A549 (cell line): ENCODE measurements at regions of chr15 and their contacts with region 1.

Region 1: GRCh38 chr15:84600851-84601838 is at the start of gene ZSCAN2:
- DNase-seq: peak; percentile 95 to 99
- ATAC-seq: peak; percentile 97 to 98
- H3K4me3 ChIP-seq: peak within 1 kb of the TSS; percentile 72
- H3K27ac ChIP-seq: peak within 1 kb of the TSS; percentile 78 to 88
- H3K4me1 ChIP-seq: peaks cover 27% of the 10 kb centered on the region
- CTCF ChIP-seq: no peak
- EP300 ChIP-seq: no peak
- POLR2A ChIP-seq: peak; percentile 36
- RAD21 ChIP-seq: no peak
- polyA plus RNA-seq, gene ZSCAN2: 16.2 and 16.5 TPM in 2 replicates

Region 2: DNA sequence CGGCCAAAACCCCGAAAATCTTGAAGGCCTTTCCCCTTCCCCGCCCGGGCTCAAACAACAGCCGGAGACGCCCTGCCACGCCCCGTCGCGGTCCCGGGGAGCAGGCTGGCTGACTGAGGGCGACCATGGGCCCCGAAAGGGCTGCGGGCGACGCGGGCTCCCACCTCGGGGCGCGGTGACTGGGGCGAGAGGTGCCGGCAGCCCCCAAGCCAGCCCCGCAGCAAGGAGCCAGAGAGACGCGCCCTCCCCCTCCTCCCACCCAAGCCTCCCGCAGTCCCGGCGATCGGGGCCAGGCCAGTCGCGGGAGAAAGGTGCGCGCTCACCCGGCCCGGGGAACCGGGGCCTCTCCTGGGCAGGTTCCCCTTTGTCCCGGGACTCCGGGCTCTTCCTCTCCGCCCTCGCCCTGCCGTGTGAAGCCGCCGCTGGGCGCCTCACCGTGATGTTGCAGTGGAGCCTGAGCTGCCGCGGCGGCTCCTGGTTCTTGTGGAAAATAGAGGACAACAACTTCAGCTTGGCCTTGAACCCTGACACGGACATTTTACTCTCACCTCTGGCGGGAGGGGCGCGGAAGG is 30.9 kb before region 1 on chr15:
- CTCF ChIA-PET with region 1: interaction called, 21 read pairs
- POLR2A ChIA-PET with region 1: no interaction called
- DNase-seq: peak; percentile 44 to 48
- ATAC-seq: peak; percentile 78 to 79
- H3K4me3 ChIP-seq: peak overlapping the region; percentile 93
- H3K27ac ChIP-seq: peak overlapping the region; percentile 91 to 96
- H3K4me1 ChIP-seq: peaks cover 5% of the 10 kb centered on the region
- CTCF ChIP-seq: no peak
- EP300 ChIP-seq: no peak
- POLR2A ChIP-seq: peak; percentile 35; the same call in 1 of the 2 replicates
- RAD21 ChIP-seq: no peak

Region 3: GRCh38 chr15:84621358-84621979 is 20.3 kb after region 1 on chr15:
- CTCF ChIA-PET with region 1: interaction called, 24 read pairs
- POLR2A ChIA-PET with region 1: no interaction called
- DNase-seq: no peak
- ATAC-seq: no peak
- H3K4me3 ChIP-seq: no peak overlapping the region
- H3K27ac ChIP-seq: no peak overlapping the region
- H3K4me1 ChIP-seq: no peaks in the 10 kb centered on the region
- CTCF ChIP-seq: no peak
- EP300 ChIP-seq: no peak
- POLR2A ChIP-seq: no peak
- RAD21 ChIP-seq: no peak

Region 4: DNA sequence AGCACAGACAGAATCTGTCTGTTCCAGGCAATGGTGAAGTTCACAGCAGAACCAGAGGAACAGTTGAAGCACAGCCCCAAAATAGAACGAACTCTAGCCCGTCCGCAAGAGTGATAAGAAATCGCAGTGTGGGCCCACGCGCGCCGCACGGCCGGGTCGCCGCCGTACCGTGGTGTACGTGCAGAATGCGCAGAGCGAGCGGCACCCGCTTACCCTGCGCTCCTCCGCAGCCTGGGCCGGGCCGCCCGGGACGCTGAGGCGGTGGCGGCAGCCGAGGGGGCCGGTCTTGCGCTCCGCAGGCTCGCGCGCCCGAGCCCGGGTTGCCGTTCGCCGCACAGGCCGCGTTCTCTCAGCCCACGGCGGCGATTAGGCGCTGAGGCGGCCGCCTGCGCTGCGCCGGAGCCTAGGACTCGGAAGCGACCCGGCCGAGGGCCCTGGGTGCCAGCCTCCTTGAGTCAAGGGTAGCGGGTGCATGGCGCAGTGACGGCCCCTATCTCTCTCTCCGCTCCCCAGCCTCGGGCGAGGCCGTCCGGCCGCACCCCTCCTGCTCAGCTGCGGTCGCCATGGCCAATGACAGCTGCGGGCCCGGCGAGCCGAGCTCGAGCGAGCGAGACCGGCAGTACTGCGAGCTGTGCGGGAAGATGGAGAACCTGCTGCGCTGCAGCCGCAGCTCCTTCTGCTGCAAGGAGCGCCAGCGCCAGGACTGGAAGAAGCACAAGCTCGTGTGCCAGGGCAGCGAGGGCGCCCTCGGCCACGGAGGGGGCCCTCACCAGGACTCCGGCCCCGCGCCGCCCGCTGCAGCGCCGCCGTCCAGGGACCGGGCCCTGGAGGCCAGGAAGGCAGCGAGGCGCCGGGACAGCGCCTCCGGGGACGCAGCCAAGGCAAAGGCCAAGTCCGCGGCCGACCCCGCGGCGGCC is 32.4 kb after region 1 on chr15:
- CTCF ChIA-PET with region 1: interaction called, 21 read pairs
- POLR2A ChIA-PET with region 1: interaction called, 16 read pairs
- DNase-seq: peak in 1 of 2 experiments; percentile 78
- ATAC-seq: peak; percentile 72 to 77
- H3K4me3 ChIP-seq: peak overlapping the region; percentile 51
- H3K27ac ChIP-seq: peak overlapping the region; percentile 63 to 87
- H3K4me1 ChIP-seq: peaks cover 24% of the 10 kb centered on the region; the same call in 2 of the 3 replicates
- CTCF ChIP-seq: peak; percentile 31; the same call in 2 of the 3 replicates
- EP300 ChIP-seq: no peak
- POLR2A ChIP-seq: peak; percentile 35
- RAD21 ChIP-seq: no peak; a peak in 2 of 5 replicates

Region 5: DNA sequence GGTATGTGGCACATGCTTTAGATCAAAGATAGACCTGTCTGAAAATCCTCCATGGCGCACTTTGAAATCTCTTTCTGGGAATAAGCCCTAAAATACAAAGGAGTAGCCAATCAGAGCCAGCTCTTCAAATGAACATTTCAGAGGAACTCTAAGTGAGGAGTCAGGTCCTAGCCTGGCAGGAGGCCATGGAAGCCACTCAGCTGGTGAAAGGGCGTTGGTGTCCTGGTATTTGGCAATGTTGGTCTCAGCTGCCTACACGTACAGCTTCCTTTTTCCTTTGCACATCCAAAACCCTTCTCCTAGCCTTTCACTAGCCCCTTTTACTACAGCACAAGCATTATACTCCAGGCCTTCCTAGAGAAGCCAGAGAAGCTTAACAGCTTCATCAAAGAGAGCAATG is 47.4 kb after region 1 on chr15:
- CTCF ChIA-PET with region 1: interaction called, 31 read pairs
- POLR2A ChIA-PET with region 1: interaction called, 8 read pairs
- DNase-seq: no peak
- ATAC-seq: no peak
- H3K4me3 ChIP-seq: no peak overlapping the region
- H3K27ac ChIP-seq: no peak overlapping the region
- H3K4me1 ChIP-seq: peaks cover 25% of the 10 kb centered on the region
- CTCF ChIP-seq: no peak
- EP300 ChIP-seq: no peak
- POLR2A ChIP-seq: no peak
- RAD21 ChIP-seq: no peak

Region 6: GRCh38 chr15:84725001-84725491 is 123.9 kb after region 1 on chr15:
- CTCF ChIA-PET with region 1: no interaction called
- POLR2A ChIA-PET with region 1: no interaction called
- DNase-seq: no peak
- ATAC-seq: 0 out of 6 replicates have a peak, but pooled peaks of 1 of the 2 experiments have one; percentile 30
- H3K4me3 ChIP-seq: no peak overlapping the region
- H3K27ac ChIP-seq: peak overlapping the region in 1 of 2 experiments; percentile 20; a peak in 2 of 6 replicates
- H3K4me1 ChIP-seq: no peaks in the 10 kb centered on the region
- CTCF ChIP-seq: no peak
- EP300 ChIP-seq: no peak
- POLR2A ChIP-seq: no peak
- RAD21 ChIP-seq: no peak

Region 7: GRCh38 chr15:85154061-85154460 is 552.9 kb after region 1 on chr15:
- CTCF ChIA-PET with region 1: no interaction called
- POLR2A ChIA-PET with region 1: no interaction called
- DNase-seq: no peak
- ATAC-seq: no peak
- H3K4me3 ChIP-seq: no peak overlapping the region
- H3K27ac ChIP-seq: no peak overlapping the region
- H3K4me1 ChIP-seq: no peaks in the 10 kb centered on the region
- CTCF ChIP-seq: no peak
- EP300 ChIP-seq: no peak
- POLR2A ChIP-seq: no peak
- RAD21 ChIP-seq: no peak

Region 8: DNA sequence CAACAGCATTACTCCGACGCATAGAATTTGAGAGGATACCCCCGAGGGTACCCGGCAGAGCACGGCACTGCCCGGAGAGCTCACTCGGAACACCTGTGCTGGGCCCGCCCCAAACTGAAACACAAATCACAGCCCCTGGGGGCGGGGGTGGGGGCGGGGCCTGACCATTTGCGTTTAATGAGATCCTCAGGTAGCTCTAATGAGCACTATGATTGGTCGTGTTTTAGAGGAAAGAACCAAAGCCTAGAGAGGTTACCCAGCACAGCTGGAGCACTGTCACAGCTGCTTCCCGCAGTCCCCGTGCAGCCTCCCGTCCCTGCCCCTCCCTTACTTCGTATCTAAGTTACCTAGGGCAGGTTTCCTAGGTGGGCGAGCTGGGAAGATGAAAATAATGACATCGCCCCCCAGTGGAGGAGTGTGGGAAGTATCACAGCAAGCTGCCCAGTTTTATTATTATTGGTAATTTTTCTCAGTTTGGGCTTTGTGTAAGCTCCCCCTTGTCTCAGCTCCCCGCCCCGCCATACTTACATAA is 567.6 kb after region 1 on chr15:
- CTCF ChIA-PET with region 1: interaction called, 10 read pairs
- POLR2A ChIA-PET with region 1: no interaction called
- DNase-seq: peak; percentile 73 to 75
- ATAC-seq: peak; percentile 85 to 90
- H3K4me3 ChIP-seq: peak overlapping the region; percentile 51
- H3K27ac ChIP-seq: peak overlapping the region; percentile 63 to 73
- H3K4me1 ChIP-seq: peaks cover 5% of the 10 kb centered on the region; the same call in 2 of the 3 replicates
- CTCF ChIP-seq: peak; percentile 84
- EP300 ChIP-seq: no peak
- POLR2A ChIP-seq: no peak
- RAD21 ChIP-seq: peak; percentile 72 to 82